CD8-positive, alpha-beta T cell (primary cell): ENCODE measurements at regions of chr1 and their contacts with region 1.

Region 1: DNA sequence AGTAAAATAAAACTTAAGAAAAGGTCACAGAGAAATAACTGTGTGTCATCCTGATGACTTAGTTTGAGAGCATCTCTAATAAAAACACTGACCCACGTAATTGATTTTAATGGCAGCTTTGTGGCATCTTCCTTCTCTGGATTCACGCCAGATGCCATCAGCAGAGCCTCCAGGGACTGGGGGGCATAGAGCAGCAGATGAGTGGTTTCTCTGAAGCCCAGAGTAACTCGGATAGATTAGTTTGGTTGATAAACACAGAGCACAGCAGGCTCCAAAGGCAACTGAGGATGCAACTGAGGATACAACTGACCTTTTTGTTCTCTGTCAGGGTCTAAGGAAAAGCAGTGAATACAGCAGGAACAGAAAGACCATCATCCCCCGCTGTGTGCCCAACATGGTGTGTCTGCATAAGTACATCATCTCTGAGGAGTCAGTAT is 180.8 kb downstream of the RPS6KC1 start:
- DNase-seq: no peak
- ATAC-seq: no peak
- H3K4me3 ChIP-seq: no peak overlapping the region
- H3K4me3 Mint-ChIP-seq: no peak overlapping the region
- H3K27ac ChIP-seq: no peak overlapping the region
- H3K27ac Mint-ChIP-seq: no peak overlapping the region
- H3K4me1 ChIP-seq: no peaks in the 10 kb centered on the region
- H3K4me1 Mint-ChIP-seq: peaks cover 2% of the 10 kb centered on the region
- H3K27me3 ChIP-seq: no peaks in the 10 kb centered on the region
- H3K27me3 Mint-ChIP-seq: no peaks in the 10 kb centered on the region
- CTCF ChIP-seq: no peak

Region 2: GRCh38 chr1:213154056-213154685 is 77.6 kb before region 1 on chr1:
- CTCF ChIA-PET with region 1: no interaction called
- POLR2A ChIA-PET with region 1: no interaction called
- intact Hi-C with region 1: no loop called
- DNase-seq: no peak
- ATAC-seq: no peak
- H3K4me3 ChIP-seq: no peak overlapping the region
- H3K4me3 Mint-ChIP-seq: no peak overlapping the region
- H3K27ac ChIP-seq: no peak overlapping the region
- H3K27ac Mint-ChIP-seq: no peak overlapping the region
- H3K4me1 ChIP-seq: no peaks in the 10 kb centered on the region
- H3K4me1 Mint-ChIP-seq: no peaks in the 10 kb centered on the region
- H3K27me3 ChIP-seq: no peaks in the 10 kb centered on the region
- H3K27me3 Mint-ChIP-seq: no peaks in the 10 kb centered on the region
- CTCF ChIP-seq: no peak

Region 3: GRCh38 chr1:213256438-213257087 is 24.8 kb after region 1 on chr1:
- CTCF ChIA-PET with region 1: no interaction called
- POLR2A ChIA-PET with region 1: no interaction called
- intact Hi-C with region 1: loop called in 1 of 2 experiments (anchors 2 kb)
- DNase-seq: no peak
- ATAC-seq: no peak
- H3K4me3 ChIP-seq: no peak overlapping the region
- H3K4me3 Mint-ChIP-seq: no peak overlapping the region
- H3K27ac ChIP-seq: no peak overlapping the region
- H3K27ac Mint-ChIP-seq: no peak overlapping the region
- H3K4me1 ChIP-seq: no peaks in the 10 kb centered on the region
- H3K4me1 Mint-ChIP-seq: no peaks in the 10 kb centered on the region
- H3K27me3 ChIP-seq: no peaks in the 10 kb centered on the region
- H3K27me3 Mint-ChIP-seq: no peaks in the 10 kb centered on the region
- CTCF ChIP-seq: no peak